Mammary epithelial cell (primary cell): ENCODE measurements at regions of chr10 and their contacts with region 1.

Region 1: GRCh38 chr10:14736600-14737081 is 38.1 kb downstream of the FAM107B start:
- DNase-seq: no peak
- H3K4me3 ChIP-seq: no peak overlapping the region
- H3K27ac ChIP-seq: no peak overlapping the region
- H3K4me1 ChIP-seq: no peaks in the 10 kb centered on the region
- H3K27me3 ChIP-seq: no peaks in the 10 kb centered on the region
- CTCF ChIP-seq: no peak

Region 2: GRCh38 chr10:13637303-13637856 is 1099.3 kb before region 1 on chr10:
- CTCF ChIA-PET with region 1: no interaction called
- dilution Hi-C with region 1: no loop called
- in situ Hi-C with region 1: no loop called
- intact Hi-C with region 1: no loop called
- DNase-seq: no peak
- H3K4me3 ChIP-seq: no peak overlapping the region
- H3K27ac ChIP-seq: no peak overlapping the region
- H3K4me1 ChIP-seq: no peaks in the 10 kb centered on the region
- H3K27me3 ChIP-seq: no peaks in the 10 kb centered on the region
- CTCF ChIP-seq: no peak

Region 3: DNA sequence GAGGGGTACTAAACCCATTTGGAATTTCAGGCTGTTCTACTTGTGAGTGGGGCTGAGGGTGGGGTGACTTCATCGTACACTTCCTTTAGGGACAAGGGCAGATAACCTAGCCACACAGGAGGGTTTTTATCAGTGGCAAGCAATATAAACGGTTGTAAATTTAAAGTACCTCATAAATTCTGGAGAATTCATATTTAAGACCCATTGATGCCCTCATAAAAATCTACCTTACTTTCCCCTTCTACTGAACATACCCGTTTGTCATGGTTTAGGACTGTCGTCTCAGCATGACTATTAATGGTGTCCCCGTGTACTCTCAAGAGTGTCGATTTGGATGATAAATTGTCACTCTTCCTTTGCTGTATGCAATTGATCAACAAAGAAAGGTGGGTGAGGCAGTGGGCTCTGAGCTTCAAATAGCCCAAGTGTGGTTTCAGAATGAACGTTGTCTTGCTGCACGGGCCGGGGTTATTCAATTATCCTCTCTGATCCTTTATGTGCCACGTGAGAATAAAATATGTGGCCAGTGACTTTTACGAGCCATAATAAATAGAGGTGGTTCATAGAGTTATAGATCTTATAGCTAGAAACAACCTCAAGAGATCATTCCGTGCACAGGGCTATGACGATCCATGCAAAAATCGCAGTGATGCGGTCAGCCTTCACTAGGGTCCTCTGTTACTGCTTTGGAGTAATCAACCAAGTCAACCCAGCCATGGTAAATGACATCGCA is 44.1 kb before region 1 on chr10:
- CTCF ChIA-PET with region 1: no interaction called
- dilution Hi-C with region 1: loop called (anchors 5 kb)
- in situ Hi-C with region 1: no loop called
- intact Hi-C with region 1: no loop called
- DNase-seq: no peak
- H3K4me3 ChIP-seq: no peak overlapping the region
- H3K27ac ChIP-seq: no peak overlapping the region
- H3K4me1 ChIP-seq: no peaks in the 10 kb centered on the region
- H3K27me3 ChIP-seq: no peaks in the 10 kb centered on the region
- CTCF ChIP-seq: no peak

Region 4: GRCh38 chr10:14782691-14783363 is 46.2 kb after region 1 on chr10:
- CTCF ChIA-PET with region 1: no interaction called
- dilution Hi-C with region 1: no loop called
- in situ Hi-C with region 1: no loop called
- intact Hi-C with region 1: no loop called
- DNase-seq: peak; percentile 35
- H3K4me3 ChIP-seq: no peak overlapping the region
- H3K27ac ChIP-seq: no peak overlapping the region
- H3K4me1 ChIP-seq: no peaks in the 10 kb centered on the region
- H3K27me3 ChIP-seq: no peaks in the 10 kb centered on the region
- CTCF ChIP-seq: no peak